CD8-positive, alpha-beta T cell (primary cell): ENCODE measurements at regions of chr3 and their contacts with region 1.

Region 1: DNA sequence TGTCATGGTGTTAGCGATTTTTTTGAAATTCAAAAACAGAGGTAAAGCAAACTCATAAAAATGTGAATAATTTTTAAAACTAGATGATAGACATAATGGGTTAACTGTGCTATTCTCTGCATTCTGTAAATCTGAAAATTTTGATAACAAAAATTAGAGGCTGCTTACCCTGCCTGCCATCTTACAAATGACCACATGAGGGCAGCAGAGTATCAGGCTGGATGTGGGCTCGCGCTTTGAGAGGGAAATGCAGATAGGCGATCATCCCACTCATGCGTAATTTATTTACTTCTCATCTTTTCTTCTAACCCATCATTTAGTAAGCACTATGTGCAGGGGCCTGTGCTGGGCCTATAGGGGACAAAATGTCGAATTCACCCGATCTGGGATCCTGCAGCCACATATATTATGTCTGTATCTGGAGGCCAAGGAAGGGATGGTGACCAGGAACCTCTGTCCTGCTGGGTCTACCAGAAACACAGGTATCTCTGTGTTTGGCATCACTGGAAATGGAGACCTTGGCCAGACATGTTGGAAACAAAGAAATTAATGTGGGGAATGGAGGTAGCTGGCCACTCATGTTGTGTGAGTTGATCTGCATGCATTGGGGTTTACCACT is 7.8 kb upstream of the RAD18 start:
- DNase-seq: peak; percentile 49 to 82 (median 71)
- ATAC-seq: peak; percentile 97
- H3K4me3 ChIP-seq: no peak overlapping the region
- H3K4me3 Mint-ChIP-seq: no peak overlapping the region
- H3K27ac ChIP-seq: no peak overlapping the region
- H3K27ac Mint-ChIP-seq: no peak overlapping the region
- H3K4me1 ChIP-seq: no peaks in the 10 kb centered on the region
- H3K4me1 Mint-ChIP-seq: peaks cover 3% of the 10 kb centered on the region
- H3K27me3 ChIP-seq: no peaks in the 10 kb centered on the region
- H3K27me3 Mint-ChIP-seq: peaks cover 11% of the 10 kb centered on the region
- CTCF ChIP-seq: peak; percentile 99

Region 2: DNA sequence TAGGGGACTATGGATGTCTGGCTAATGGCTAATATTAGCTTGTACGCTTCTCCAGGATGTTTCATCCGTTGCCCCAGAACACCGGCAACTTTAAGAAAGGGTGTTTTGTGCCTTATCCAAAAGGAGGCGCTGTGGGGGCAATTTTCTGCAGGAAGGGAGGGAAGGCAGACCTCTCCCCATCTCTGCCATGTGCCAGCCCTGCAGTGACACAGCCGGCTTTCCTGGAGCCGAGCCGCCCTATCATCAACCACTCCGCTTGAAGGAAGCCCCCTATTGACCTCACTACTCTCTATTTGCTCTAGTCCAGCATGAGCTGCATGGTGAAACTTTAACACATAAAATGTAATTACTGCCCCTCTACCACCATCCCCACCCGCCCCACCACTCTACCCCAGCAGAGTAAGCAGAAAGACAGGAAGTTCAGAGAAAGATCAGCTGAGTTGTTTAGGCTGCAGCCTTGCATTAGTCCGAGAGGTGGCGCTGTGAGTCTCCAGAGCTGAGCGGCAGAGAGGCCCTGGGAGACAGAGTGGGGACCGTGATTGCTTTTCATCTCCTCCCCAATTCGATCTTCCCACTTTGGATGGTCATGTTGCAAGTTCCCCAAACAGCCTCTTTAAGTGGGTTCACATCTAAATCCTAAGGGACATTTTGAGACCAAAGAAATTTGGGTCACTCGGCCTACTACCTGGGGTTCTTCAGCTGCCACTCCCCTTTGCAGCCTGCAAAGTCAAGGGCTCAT is 16.7 kb after region 1 on chr3:
- CTCF ChIA-PET with region 1: interaction called, 16 read pairs
- POLR2A ChIA-PET with region 1: no interaction called
- intact Hi-C with region 1: no loop called
- DNase-seq: peak in 8 of 9 experiments; percentile 18 to 67 (median 49)
- ATAC-seq: peak; percentile 95
- H3K4me3 ChIP-seq: no peak overlapping the region
- H3K4me3 Mint-ChIP-seq: peak overlapping the region; percentile 37
- H3K27ac ChIP-seq: no peak overlapping the region
- H3K27ac Mint-ChIP-seq: no peak overlapping the region
- H3K4me1 ChIP-seq: no peaks in the 10 kb centered on the region
- H3K4me1 Mint-ChIP-seq: peaks cover 4% of the 10 kb centered on the region
- H3K27me3 ChIP-seq: no peaks in the 10 kb centered on the region
- H3K27me3 Mint-ChIP-seq: no peaks in the 10 kb centered on the region
- CTCF ChIP-seq: peak; percentile 64

Region 3: GRCh38 chr3:9067352-9067975 is 96.4 kb after region 1 on chr3:
- CTCF ChIA-PET with region 1: interaction called, 6 read pairs
- POLR2A ChIA-PET with region 1: no interaction called
- intact Hi-C with region 1: loop called (anchors 1 to 2 kb)
- DNase-seq: peak in 2 of 9 experiments; percentile 16 to 27
- ATAC-seq: no peak
- H3K4me3 ChIP-seq: no peak overlapping the region
- H3K4me3 Mint-ChIP-seq: no peak overlapping the region
- H3K27ac ChIP-seq: no peak overlapping the region
- H3K27ac Mint-ChIP-seq: no peak overlapping the region
- H3K4me1 ChIP-seq: no peaks in the 10 kb centered on the region
- H3K4me1 Mint-ChIP-seq: no peaks in the 10 kb centered on the region
- H3K27me3 ChIP-seq: no peaks in the 10 kb centered on the region
- H3K27me3 Mint-ChIP-seq: no peaks in the 10 kb centered on the region
- CTCF ChIP-seq: peak; percentile 30

Region 4: DNA sequence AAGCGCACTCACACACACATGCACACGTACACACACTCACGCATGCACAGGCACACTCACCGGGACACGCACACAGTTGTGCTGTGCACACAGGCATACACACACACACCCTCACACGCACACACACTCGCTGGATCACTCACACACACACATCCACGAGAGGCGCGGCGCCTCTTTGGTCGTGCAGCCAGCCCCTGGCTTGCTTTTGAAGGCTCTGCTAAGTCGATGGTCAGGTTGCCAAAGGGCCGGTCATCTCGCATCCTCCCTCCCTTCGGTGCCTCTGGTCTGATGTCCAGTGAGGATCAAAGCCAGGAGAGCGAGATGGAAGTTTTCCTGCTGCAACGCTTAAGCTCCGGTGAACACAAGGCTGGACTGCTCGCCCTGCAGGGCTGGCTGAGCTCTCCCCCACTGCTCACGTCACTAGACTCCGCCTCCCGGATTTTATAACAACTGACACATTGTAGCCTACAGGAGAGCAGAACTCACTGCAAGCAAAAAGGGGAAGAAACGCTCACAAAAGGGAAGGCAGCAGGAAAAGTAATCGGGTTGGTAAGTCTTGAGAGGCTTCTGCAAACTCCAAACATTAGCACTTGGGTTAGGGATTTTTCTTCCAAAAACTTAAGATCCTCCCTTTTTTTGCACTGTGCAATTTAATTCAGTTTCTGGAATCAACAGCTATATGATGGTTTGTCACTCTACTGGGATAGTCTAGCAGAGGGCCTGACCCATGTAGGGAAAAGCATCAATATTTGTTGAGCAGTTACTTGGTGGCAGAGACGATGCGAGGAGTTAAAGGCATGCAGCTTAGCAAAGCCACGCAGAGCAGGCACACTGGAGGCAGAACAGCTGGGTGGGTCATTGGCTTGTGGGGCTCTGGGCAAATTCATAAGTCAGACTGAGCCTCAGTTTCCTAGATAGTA is 278.5 kb after region 1 on chr3 and contains the start of gene SRGAP3:
- CTCF ChIA-PET with region 1: interaction called, 5 read pairs
- POLR2A ChIA-PET with region 1: no interaction called
- intact Hi-C with region 1: loop called in 1 of 2 experiments (anchors 5 kb)
- DNase-seq: peak; percentile 53 to 87 (median 77)
- ATAC-seq: peak; percentile 99
- H3K4me3 ChIP-seq: peak within 1 kb of the TSS; percentile 58 to 65
- H3K4me3 Mint-ChIP-seq: peak within 1 kb of the TSS; percentile 91
- H3K27ac ChIP-seq: no peak within 1 kb of the TSS
- H3K27ac Mint-ChIP-seq: peak within 1 kb of the TSS; percentile 75
- H3K4me1 ChIP-seq: peaks cover 5% of the 10 kb centered on the region
- H3K4me1 Mint-ChIP-seq: peaks cover 24% of the 10 kb centered on the region
- H3K27me3 ChIP-seq: no peaks in the 10 kb centered on the region
- H3K27me3 Mint-ChIP-seq: peaks cover 6% of the 10 kb centered on the region
- CTCF ChIP-seq: peak; percentile 28
- total RNA-seq, gene SRGAP3: 2.2 to 2.3 TPM

Region 5: DNA sequence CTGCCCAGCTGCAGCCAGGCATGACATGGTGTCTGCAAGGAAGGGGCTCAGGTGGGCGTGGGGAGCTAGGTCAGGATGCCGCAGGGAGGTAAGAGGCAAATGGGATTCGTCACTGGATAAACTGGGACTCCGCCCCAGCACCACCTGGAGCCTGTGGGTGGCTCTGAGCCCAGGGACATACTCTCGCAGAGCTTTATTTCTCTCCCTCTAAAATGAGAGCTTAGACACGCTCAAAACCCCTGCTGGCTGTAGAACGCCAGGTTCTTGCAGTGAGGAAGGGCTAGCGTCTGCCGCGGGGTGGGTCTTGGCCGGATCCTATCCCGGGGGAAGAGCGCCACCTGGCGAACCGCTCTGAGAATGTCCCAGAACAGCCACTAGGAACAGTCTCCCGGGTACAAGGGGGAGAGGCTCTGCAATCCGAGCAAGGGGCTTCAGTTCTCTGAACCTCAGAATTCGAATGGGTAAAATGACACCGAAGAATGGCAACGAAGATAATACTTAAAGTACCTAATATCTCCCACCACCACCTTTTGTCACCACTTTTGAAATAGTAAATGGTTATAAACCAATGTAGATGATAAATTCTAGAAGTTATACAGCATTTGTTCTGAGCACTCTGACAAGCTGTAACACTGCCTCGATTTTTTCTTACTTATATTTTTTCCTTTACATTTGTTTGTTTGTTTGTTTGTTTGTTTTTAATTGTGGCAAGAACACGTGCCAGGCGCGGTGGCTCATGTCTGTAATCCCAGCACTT is 331.5 kb after region 1 on chr3:
- CTCF ChIA-PET with region 1: interaction called, 201 read pairs
- POLR2A ChIA-PET with region 1: no interaction called
- intact Hi-C with region 1: loop called (anchors 1 kb)
- DNase-seq: peak; percentile 53 to 85 (median 79)
- ATAC-seq: peak; percentile 98
- H3K4me3 ChIP-seq: no peak overlapping the region
- H3K4me3 Mint-ChIP-seq: no peak overlapping the region
- H3K27ac ChIP-seq: no peak overlapping the region
- H3K27ac Mint-ChIP-seq: no peak overlapping the region
- H3K4me1 ChIP-seq: peaks cover 5% of the 10 kb centered on the region
- H3K4me1 Mint-ChIP-seq: peaks cover 7% of the 10 kb centered on the region
- H3K27me3 ChIP-seq: no peaks in the 10 kb centered on the region
- H3K27me3 Mint-ChIP-seq: peaks cover 12% of the 10 kb centered on the region
- CTCF ChIP-seq: peak; percentile 93

Region 6: GRCh38 chr3:9352917-9353752 is 382.1 kb after region 1 on chr3:
- CTCF ChIA-PET with region 1: no interaction called
- POLR2A ChIA-PET with region 1: no interaction called
- intact Hi-C with region 1: loop called in 1 of 2 experiments (anchors 5 kb)
- DNase-seq: peak; percentile 22 to 77 (median 63)
- ATAC-seq: peak; percentile 88
- H3K4me3 ChIP-seq: no peak overlapping the region
- H3K4me3 Mint-ChIP-seq: no peak overlapping the region
- H3K27ac ChIP-seq: no peak overlapping the region
- H3K27ac Mint-ChIP-seq: no peak overlapping the region
- H3K4me1 ChIP-seq: no peaks in the 10 kb centered on the region
- H3K4me1 Mint-ChIP-seq: peaks cover 4% of the 10 kb centered on the region
- H3K27me3 ChIP-seq: no peaks in the 10 kb centered on the region
- H3K27me3 Mint-ChIP-seq: no peaks in the 10 kb centered on the region
- CTCF ChIP-seq: peak; percentile 98

Region 7: GRCh38 chr3:9422712-9423424 is 451.8 kb after region 1 on chr3:
- CTCF ChIA-PET with region 1: no interaction called
- POLR2A ChIA-PET with region 1: no interaction called
- intact Hi-C with region 1: loop called (anchors 2 to 5 kb)
- DNase-seq: peak in 2 of 9 experiments; percentile 53 to 67
- ATAC-seq: peak; percentile 93
- H3K4me3 ChIP-seq: no peak overlapping the region
- H3K4me3 Mint-ChIP-seq: no peak overlapping the region
- H3K27ac ChIP-seq: peak overlapping the region in 1 of 2 experiments; percentile 38
- H3K27ac Mint-ChIP-seq: peak overlapping the region; percentile 86
- H3K4me1 ChIP-seq: peaks cover 6% of the 10 kb centered on the region
- H3K4me1 Mint-ChIP-seq: peaks cover 54% of the 10 kb centered on the region
- H3K27me3 ChIP-seq: no peaks in the 10 kb centered on the region
- H3K27me3 Mint-ChIP-seq: no peaks in the 10 kb centered on the region
- CTCF ChIP-seq: peak; percentile 73